ENCODE measurements at regions of chr4 and their contacts with region 1.

Region 1: GRCh38 chr4:84503495-84504437 is 4.7 kb upstream of the NKX6-1 start:
- DNase-seq: peak in 1 of 9 donors; percentile 31
- ATAC-seq: peak; percentile 69
- H3K4me3 ChIP-seq: no peak overlapping the region
- H3K4me3 Mint-ChIP-seq: peak overlapping the region in 2 of 10 donors; percentile 35 to 48
- H3K27ac ChIP-seq: no peak overlapping the region
- H3K27ac Mint-ChIP-seq: peak overlapping the region in 2 of 9 donors; percentile 39 to 78
- H3K4me1 ChIP-seq: peaks cover 0 to under 1% of the 10 kb centered on the region in 2 donors
- H3K4me1 Mint-ChIP-seq: peaks cover 0 to 18% (median 17%) of the 10 kb centered on the region in 7 donors
- H3K27me3 ChIP-seq: peaks cover 10 to 48% of the 10 kb centered on the region in 2 donors
- H3K27me3 Mint-ChIP-seq: peaks cover 76 to 85% (median 84%) of the 10 kb centered on the region in 5 donors

Region 2: GRCh38 chr4:84479663-84480062 is 24.1 kb before region 1 on chr4:
- CTCF ChIA-PET with region 1: no interaction called
- POLR2A ChIA-PET with region 1: no interaction called
- intact Hi-C with region 1: loop called in 1 of 2 experiments (anchors 2 kb)
- DNase-seq: no peak
- ATAC-seq: no peak
- H3K4me3 ChIP-seq: no peak overlapping the region
- H3K4me3 Mint-ChIP-seq: no peak overlapping the region
- H3K27ac ChIP-seq: no peak overlapping the region
- H3K27ac Mint-ChIP-seq: no peak overlapping the region
- H3K4me1 ChIP-seq: no peaks in the 10 kb centered on the region
- H3K4me1 Mint-ChIP-seq: peaks cover 7 to 23% (median 15%) of the 10 kb centered on the region in 7 donors
- H3K27me3 ChIP-seq: peaks cover 0 to 16% of the 10 kb centered on the region in 2 donors
- H3K27me3 Mint-ChIP-seq: peaks cover 63 to 79% (median 73%) of the 10 kb centered on the region in 5 donors

Region 3: DNA sequence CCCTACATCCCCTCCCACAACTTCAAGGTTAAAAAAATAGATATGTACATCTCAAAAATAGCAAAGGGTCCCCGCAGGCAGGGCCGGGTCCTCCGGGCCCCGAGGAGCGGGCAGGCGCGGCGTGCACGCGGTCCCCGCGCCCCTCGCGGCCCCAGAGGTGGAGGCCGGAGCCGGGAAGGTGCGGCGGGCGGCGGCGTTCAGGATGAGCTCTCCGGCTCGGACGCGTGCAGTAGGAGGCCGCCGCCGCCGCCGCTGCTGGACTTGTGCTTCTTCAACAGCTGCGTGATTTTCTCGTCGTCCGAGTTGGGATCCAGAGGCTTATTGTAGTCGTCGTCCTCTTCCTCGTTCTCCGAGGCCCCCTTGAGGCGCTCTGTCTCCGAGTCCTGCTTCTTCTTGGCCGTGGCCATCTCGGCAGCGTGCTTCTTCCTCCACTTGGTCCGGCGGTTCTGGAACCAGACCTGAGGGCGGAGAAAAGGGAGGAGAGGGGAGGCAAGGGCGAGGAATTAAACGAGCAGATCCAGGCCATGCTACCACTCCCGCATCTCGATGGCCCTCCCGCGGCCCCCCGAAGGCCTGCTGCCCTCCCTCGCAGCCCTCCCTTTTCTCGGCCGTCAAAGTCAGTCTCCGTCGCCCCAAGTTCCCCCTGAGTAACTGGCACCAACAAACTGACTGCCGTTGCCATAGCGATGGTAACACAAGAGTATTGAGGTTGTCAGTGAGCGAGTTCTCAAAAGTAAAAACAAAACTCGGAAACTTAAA is 10.5 kb before region 1 on chr4:
- CTCF ChIA-PET with region 1: no interaction called
- POLR2A ChIA-PET with region 1: no interaction called
- intact Hi-C with region 1: loop called in 1 of 2 experiments (anchors 1 kb)
- DNase-seq: peak in 1 of 9 donors; percentile 23
- ATAC-seq: no peak
- H3K4me3 ChIP-seq: no peak overlapping the region
- H3K4me3 Mint-ChIP-seq: peak overlapping the region; percentile 29 to 68 (median 51)
- H3K27ac ChIP-seq: no peak overlapping the region
- H3K27ac Mint-ChIP-seq: peak overlapping the region in 1 of 9 donors; percentile 77
- H3K4me1 ChIP-seq: peaks cover 0 to 6% of the 10 kb centered on the region in 2 donors
- H3K4me1 Mint-ChIP-seq: peaks cover 0 to 20% (median 14%) of the 10 kb centered on the region in 7 donors
- H3K27me3 ChIP-seq: peaks cover 4 to 34% of the 10 kb centered on the region in 2 donors
- H3K27me3 Mint-ChIP-seq: peaks cover 82 to 89% (median 86%) of the 10 kb centered on the region in 5 donors

Region 4: DNA sequence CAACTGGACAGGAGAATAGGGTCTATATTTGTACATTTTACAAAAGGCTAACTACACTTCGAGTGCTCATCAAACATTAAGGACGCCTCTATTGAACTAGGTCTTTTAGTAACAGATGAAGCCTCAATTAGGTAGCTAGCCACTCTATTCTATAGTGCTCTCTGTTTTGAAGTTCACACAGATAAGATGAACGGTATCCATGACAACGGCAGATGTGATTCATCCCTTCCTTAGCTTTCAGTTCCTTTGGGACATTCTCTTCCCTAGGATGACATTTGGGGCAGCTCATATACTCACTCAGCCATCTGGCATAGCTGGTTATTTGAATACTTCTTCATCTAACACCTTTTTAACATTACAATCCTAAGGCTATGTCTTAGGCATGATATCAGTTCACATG is 525.1 kb after region 1 on chr4:
- CTCF ChIA-PET with region 1: no interaction called
- POLR2A ChIA-PET with region 1: no interaction called
- intact Hi-C with region 1: no loop called
- DNase-seq: no peak
- ATAC-seq: no peak
- H3K4me3 ChIP-seq: no peak overlapping the region
- H3K4me3 Mint-ChIP-seq: no peak overlapping the region
- H3K27ac ChIP-seq: no peak overlapping the region
- H3K27ac Mint-ChIP-seq: no peak overlapping the region
- H3K4me1 ChIP-seq: no peaks in the 10 kb centered on the region
- H3K4me1 Mint-ChIP-seq: no peaks in the 10 kb centered on the region
- H3K27me3 ChIP-seq: no peaks in the 10 kb centered on the region
- H3K27me3 Mint-ChIP-seq: no peaks in the 10 kb centered on the region

Measured in naive thymus-derived CD4-positive, alpha-beta T cell (primary cell).